MCF 10A (cell line): ENCODE measurements at regions of chr1 and their contacts with region 1.

Region 1: DNA sequence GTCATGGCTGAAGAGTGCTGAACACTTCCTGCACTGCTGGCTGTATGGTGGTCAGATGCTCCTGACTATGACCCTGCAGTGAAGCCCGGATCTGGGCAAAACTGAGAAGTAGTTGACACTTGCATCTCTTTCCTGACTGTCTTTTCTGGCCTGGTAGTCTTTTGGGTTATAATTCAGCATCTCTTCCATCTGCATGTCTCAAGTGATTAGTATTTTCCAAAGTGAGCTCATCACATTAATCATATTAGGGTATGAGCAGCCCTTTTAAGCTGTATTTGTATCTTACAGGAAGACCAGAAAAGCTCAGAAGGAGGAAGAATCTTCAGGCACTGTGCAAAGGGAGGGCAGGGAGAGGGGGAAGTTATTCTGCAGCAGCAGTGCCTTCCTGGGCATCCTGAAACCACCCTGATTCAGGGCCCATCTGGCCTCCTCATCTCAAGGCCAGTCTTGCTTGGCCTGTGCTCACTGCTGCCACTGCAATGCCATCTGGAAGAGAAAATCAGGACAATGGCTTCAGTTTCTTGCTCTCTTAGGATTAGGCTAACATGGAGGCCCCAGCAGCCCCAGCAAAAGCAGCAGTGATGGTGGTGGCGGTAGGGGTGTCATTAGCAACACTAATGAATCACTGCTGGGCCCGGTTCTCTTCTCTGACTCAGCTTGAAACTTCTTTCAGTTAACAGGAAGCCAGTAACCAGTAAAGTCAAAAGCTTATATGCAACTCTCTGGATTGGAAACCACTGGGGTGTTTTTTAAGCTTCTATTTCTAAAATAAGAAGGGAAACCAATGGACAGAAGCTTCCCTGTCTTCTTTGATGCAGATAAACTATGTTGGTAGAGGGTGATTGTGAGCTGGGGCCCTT is 63.3 kb upstream of the WDR26 start:
- DNase-seq: peak; percentile 97
- H3K4me3 Mint-ChIP-seq: peak overlapping the region; percentile 50
- H3K27ac Mint-ChIP-seq: peak overlapping the region; percentile 86
- H3K4me1 Mint-ChIP-seq: peaks cover 69% of the 10 kb centered on the region
- H3K27me3 Mint-ChIP-seq: no peaks in the 10 kb centered on the region
- CTCF ChIP-seq: peak; percentile 6

Region 2: DNA sequence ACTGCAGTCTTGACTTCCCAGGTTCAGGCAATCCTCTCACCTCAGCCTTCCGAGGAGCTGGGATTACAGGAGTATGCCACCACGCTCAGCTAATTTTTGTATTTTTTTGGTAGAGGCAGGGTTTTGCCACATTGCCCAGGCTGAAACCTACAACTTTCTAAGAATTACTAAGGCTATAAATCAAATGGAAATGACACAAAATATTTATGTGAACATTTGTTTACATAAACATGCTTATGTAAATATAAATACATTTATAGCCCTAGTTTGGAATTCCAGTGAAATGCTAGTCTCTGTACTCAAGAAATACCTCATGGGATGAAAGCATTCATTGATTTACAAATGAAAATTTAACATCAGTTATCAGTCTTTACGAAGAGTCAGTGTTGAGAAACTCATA is 215.8 kb before region 1 on chr1:
- CTCF ChIA-PET with region 1: no interaction called
- POLR2A ChIA-PET with region 1: no interaction called
- intact Hi-C with region 1: no loop called
- DNase-seq: no peak
- H3K4me3 Mint-ChIP-seq: no peak overlapping the region
- H3K27ac Mint-ChIP-seq: no peak overlapping the region
- H3K4me1 Mint-ChIP-seq: no peaks in the 10 kb centered on the region
- H3K27me3 Mint-ChIP-seq: no peaks in the 10 kb centered on the region
- CTCF ChIP-seq: no peak

Region 3: GRCh38 chr1:224356685-224357625 is 141.0 kb before region 1 on chr1 and contains the start of gene CNIH4:
- CTCF ChIA-PET with region 1: no interaction called
- POLR2A ChIA-PET with region 1: interaction called, 15 read pairs
- intact Hi-C with region 1: no loop called
- DNase-seq: peak; percentile 99
- H3K4me3 Mint-ChIP-seq: peak within 1 kb of the TSS; percentile 89
- H3K27ac Mint-ChIP-seq: peak within 1 kb of the TSS; percentile 74
- H3K4me1 Mint-ChIP-seq: peaks cover 17% of the 10 kb centered on the region
- H3K27me3 Mint-ChIP-seq: no peaks in the 10 kb centered on the region
- CTCF ChIP-seq: peak; percentile 11
- total RNA-seq, gene CNIH4: 190 and 212 TPM in 2 replicates

Region 4: GRCh38 chr1:224447251-224447650 is 50.7 kb before region 1 on chr1:
- CTCF ChIA-PET with region 1: no interaction called
- POLR2A ChIA-PET with region 1: interaction called, 12 read pairs
- intact Hi-C with region 1: no loop called
- DNase-seq: peak; percentile 82
- H3K4me3 Mint-ChIP-seq: no peak overlapping the region
- H3K27ac Mint-ChIP-seq: peak overlapping the region; percentile 21
- H3K4me1 Mint-ChIP-seq: peaks cover 34% of the 10 kb centered on the region
- H3K27me3 Mint-ChIP-seq: no peaks in the 10 kb centered on the region
- CTCF ChIP-seq: no peak

Region 5: DNA sequence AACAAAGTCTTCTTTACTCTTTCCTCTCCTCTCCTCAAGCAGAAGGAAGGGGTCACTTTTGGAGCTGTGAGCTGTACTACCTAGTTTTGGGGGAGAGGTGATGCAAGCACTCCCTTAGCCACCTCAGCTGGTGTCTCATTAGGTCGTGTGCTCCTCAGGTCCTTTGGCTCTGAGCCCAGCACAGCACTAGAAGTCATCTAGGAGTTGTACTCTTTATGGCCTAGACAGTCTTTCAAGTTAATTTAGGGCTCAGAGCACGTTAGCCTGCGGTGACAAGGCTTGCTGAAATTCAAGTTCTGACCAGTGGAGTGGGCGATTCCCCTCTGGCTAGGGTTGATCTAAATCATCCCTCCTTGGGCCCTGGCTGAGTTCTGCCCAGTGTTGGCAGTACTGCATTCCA is 15.3 kb before region 1 on chr1:
- CTCF ChIA-PET with region 1: interaction called, 31 read pairs
- POLR2A ChIA-PET with region 1: interaction called, 130 read pairs
- intact Hi-C with region 1: no loop called
- DNase-seq: peak; percentile 85
- H3K4me3 Mint-ChIP-seq: no peak overlapping the region
- H3K27ac Mint-ChIP-seq: peak overlapping the region; percentile 61
- H3K4me1 Mint-ChIP-seq: peaks cover 34% of the 10 kb centered on the region
- H3K27me3 Mint-ChIP-seq: no peaks in the 10 kb centered on the region
- CTCF ChIP-seq: no peak

Region 6: DNA sequence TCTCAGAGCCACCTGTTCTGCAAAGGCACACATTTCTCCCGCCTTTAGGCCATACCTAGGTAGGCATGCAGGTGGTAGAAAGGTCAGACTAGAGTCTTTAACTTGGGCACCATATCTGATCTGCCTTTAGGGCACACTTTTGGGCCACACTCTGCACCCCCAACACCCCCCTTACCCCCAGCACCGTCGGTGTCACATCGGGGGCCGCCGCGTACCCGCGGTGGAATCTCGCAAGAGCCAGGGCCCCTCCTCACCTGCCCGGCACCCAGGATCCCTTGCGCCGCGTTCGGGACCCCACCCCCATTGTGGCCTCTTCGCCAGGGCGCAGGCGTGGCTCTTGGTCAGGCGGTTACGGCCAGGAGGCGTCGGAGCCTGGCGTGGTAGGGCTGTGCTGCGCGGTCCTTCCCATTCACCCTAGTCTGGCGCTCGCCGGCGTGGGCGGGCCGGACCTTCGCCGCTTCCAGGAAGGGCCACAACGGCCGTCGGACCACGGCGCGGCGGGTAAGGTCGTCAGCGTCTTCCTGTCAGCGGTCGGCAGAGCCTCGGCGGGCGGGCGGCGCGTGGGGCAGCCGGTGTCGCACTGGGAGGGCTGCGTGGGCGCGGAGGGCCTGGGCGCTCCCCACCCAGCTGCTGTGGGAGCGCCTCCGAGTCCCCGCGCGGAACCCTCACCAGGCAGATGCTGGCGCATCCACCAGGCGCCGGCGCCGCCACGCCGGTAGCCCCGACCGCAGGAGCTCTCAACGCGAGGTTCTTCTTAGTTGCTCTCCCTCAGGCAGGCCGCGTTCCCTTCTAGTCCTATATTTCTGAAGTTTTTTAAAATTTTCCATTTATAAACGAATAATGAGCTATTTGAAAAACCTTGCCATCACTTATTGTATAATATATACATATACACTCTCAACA is 431.6 kb after region 1 on chr1 and contains the start of gene DNAH14:
- CTCF ChIA-PET with region 1: interaction called, 41 read pairs
- POLR2A ChIA-PET with region 1: interaction called, 28 read pairs
- intact Hi-C with region 1: no loop called
- DNase-seq: peak; percentile 96
- H3K4me3 Mint-ChIP-seq: peak within 1 kb of the TSS; percentile 83
- H3K27ac Mint-ChIP-seq: peak within 1 kb of the TSS; percentile 81
- H3K4me1 Mint-ChIP-seq: no peaks in the 10 kb centered on the region
- H3K27me3 Mint-ChIP-seq: no peaks in the 10 kb centered on the region
- CTCF ChIP-seq: no peak
- total RNA-seq, gene DNAH14: 69.7 and 70.8 TPM in 2 replicates